ENCODE measurements at regions of chr12 and their contacts with region 1.

Region 1: GRCh38 chr12:80846952-80847351 is 90.8 kb downstream of the LIN7A start:
- DNase-seq: no peak
- ATAC-seq: no peak
- H3K4me3 ChIP-seq: no peak overlapping the region
- H3K27ac ChIP-seq: no peak overlapping the region
- H3K4me1 ChIP-seq: no peaks in the 10 kb centered on the region
- H3K27me3 ChIP-seq: no peaks in the 10 kb centered on the region
- CTCF ChIP-seq: no peak

Region 2: DNA sequence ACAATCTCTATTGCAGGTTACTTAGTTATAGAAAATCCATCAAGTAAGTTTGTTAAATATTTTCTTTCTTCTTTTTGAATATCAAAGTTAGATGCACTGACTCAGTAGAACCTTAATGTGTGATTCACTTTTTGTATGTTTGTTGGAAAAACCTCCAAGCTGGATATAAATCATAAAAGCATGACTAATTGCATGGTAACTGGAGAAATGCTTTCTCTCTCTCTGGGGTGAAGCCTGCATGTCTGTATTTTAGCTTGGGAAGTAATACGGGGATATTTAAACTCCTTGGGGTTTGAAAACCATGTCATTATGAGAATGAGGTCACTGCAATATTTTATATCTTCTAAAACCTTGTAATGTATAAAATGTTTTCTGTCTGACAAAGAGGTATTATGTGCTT is 198.1 kb before region 1 on chr12:
- intact Hi-C with region 1: no loop called
- DNase-seq: no peak
- ATAC-seq: no peak
- H3K4me3 ChIP-seq: no peak overlapping the region
- H3K27ac ChIP-seq: no peak overlapping the region
- H3K4me1 ChIP-seq: no peaks in the 10 kb centered on the region
- H3K27me3 ChIP-seq: no peaks in the 10 kb centered on the region
- CTCF ChIP-seq: no peak

Region 3: DNA sequence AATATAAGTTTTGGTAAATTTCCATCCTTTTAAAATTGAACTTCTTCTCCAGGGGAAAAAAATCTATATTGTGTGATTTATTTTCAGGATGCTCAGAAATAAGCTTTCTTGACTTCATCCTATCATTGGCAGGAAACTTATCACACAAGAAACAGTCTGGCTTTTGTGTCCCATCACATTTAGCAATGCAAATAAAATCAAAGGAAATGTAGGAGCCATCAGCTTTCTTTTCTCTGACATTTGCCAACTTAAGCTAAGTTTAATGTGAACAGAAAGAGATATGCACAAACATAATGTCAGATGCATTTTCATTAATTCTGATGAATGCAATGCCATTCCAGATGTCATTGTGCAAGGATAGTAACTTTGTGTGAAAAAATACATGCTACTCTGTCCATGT is 34.2 kb after region 1 on chr12:
- intact Hi-C with region 1: loop called (anchors 5 kb)
- DNase-seq: no peak
- ATAC-seq: no peak
- H3K4me3 ChIP-seq: no peak overlapping the region
- H3K27ac ChIP-seq: no peak overlapping the region
- H3K4me1 ChIP-seq: peaks cover 8% of the 10 kb centered on the region
- H3K27me3 ChIP-seq: no peaks in the 10 kb centered on the region
- CTCF ChIP-seq: no peak

Region 4: DNA sequence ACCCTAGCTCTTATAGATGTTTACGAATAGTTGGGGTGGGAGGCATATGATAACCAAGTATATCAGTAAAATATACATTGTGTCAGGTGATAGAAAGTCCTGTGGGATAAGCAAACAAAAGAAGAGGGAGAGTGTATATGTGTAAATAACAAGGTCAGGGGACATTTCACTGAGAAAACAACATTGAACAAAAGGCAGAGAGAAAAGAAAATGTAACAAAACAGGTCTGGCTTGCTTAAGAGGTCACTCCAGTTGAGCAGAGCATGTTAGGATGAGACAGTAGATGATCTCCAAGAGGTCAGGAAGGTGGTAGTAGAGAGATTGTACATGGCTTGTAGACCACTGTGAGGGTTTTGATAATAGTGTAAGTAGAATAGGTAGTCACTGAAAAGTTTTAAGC is 535.0 kb after region 1 on chr12:
- intact Hi-C with region 1: no loop called
- DNase-seq: no peak
- ATAC-seq: no peak
- H3K4me3 ChIP-seq: no peak overlapping the region
- H3K27ac ChIP-seq: no peak overlapping the region
- H3K4me1 ChIP-seq: no peaks in the 10 kb centered on the region
- H3K27me3 ChIP-seq: no peaks in the 10 kb centered on the region
- CTCF ChIP-seq: no peak